ENCODE measurements at regions of chr2 and their contacts with region 1.

Region 1: DNA sequence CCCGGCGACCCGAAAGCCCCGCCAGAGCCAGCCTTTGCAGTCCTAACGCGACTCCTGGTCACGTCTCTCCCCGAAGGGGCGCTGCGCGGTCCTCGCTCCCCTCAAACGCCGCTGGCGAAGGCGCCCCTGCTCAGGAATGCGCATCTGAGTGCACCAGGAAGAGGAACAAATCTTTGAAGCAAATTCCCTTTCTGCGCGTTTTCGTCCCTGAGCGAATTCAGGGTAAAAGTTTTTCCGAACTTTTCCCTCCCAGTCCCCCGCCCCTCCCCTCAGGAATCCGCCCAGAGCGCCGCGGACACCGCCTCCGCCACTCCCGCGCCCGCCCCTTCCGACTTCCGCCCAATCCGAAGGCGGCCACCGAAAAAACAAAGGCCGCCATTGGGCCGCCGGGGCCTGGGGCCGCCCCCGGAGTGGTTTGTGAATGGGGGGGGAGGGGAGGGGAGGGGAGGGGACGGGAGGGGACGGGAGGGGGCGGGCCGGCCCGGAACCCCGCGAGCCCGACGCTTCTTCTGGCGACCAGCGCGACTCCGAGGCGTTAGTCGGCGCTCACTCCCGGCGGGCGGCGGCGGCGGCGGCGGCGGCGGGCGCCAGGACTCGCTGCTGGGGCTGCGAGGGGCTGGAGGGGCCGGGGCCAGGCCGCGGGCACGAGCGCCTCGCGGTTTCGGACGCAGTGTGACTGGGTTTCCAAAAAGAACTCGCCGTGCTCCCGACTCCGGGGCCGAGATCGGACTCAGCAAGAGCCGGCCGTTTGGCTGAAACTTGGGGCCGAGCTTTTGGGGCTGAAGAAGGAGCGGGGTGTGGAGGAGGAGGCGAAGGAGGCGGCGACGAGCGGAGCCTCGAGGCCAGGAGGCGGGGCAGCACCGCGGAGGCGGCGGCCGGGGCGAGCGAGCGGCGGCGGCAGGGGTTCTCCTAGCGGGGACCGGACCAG is at the start of gene FZD7:
- DNase-seq: peak; percentile 98
- H3K4me3 ChIP-seq: peak within 1 kb of the TSS; percentile 69 to 84 (median 74)
- H3K27ac ChIP-seq: peak within 1 kb of the TSS; percentile 96 to 99 (median 98)
- H3K4me1 ChIP-seq: peaks cover 0 to 27% (median 12%) of the 10 kb centered on the region in 4 donors
- H3K27me3 ChIP-seq: peaks cover 0 to 5% (median 0%) of the 10 kb centered on the region in 3 donors
- CTCF ChIP-seq: no peak
- EP300 ChIP-seq: no peak
- POLR2A ChIP-seq: peak; percentile 36 to 47
- total RNA-seq, gene FZD7: 37.9 to 51.2 (median 48.1) TPM

Region 2: GRCh38 chr2:201642579-201643215 is 390.9 kb before region 1 on chr2:
- intact Hi-C with region 1: loop called (anchors 10 kb)
- DNase-seq: peak; percentile 89
- H3K4me3 ChIP-seq: peak overlapping the region; percentile 71 to 84 (median 76)
- H3K27ac ChIP-seq: peak overlapping the region; percentile 93 to 96 (median 94)
- H3K4me1 ChIP-seq: peaks cover 0 to 20% (median 18%) of the 10 kb centered on the region in 4 donors
- H3K27me3 ChIP-seq: no peaks in the 10 kb centered on the region
- CTCF ChIP-seq: no peak
- EP300 ChIP-seq: peak in 1 of 4 donors; percentile 2
- POLR2A ChIP-seq: peak; percentile 48 to 80

Region 3: DNA sequence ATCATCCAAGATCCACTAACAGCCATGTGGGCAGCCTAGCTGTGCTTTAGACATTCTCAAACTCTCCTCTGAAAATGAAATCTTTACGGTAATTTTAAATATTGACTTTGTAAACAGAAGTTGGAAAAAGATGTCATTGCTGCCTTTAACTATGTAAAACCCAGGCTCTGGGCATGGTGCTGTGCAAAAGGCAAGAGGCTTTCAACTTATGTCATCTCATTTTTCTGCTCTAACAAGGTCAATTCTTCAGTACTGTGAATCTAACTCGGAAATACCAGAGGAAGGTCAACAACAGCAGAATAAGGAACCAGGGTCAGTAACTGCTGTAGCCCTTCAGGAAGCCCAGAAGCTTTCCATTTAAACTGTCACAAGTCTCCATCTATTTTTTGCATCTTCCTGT is 298.1 kb before region 1 on chr2:
- intact Hi-C with region 1: no loop called
- DNase-seq: no peak
- H3K4me3 ChIP-seq: no peak overlapping the region
- H3K27ac ChIP-seq: no peak overlapping the region
- H3K4me1 ChIP-seq: no peaks in the 10 kb centered on the region
- H3K27me3 ChIP-seq: no peaks in the 10 kb centered on the region
- CTCF ChIP-seq: no peak
- EP300 ChIP-seq: no peak
- POLR2A ChIP-seq: no peak

Region 4: DNA sequence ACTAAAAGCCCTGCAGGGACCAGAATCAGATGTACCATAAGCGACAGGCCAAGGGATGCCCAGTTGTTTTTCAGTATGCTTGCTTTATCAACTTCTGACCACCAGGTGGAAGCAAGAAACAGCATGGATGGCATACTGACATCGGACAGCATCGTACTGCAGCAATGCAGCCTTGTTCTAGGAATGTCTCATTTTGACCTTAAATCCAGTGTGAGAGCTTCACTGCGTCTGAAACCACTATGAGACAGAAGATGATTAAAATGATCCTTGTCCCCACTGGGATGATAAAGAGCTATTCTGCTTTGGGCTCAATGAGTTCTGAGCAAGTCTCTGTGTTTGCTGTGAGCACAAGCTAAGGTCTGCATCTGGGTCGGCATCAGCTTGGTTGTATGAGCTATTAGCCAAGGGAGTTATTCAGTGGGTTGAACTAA is 172.9 kb before region 1 on chr2:
- intact Hi-C with region 1: loop called (anchors 1 kb)
- DNase-seq: peak; percentile 68
- H3K4me3 ChIP-seq: no peak overlapping the region
- H3K27ac ChIP-seq: no peak overlapping the region
- H3K4me1 ChIP-seq: peaks cover 0 to 24% (median 11%) of the 10 kb centered on the region in 4 donors
- H3K27me3 ChIP-seq: no peaks in the 10 kb centered on the region
- CTCF ChIP-seq: peak; percentile 68 to 85 (median 84)
- EP300 ChIP-seq: no peak
- POLR2A ChIP-seq: no peak

Region 5: GRCh38 chr2:201939453-201939941 is 94.1 kb before region 1 on chr2:
- intact Hi-C with region 1: no loop called
- DNase-seq: no peak
- H3K4me3 ChIP-seq: no peak overlapping the region
- H3K27ac ChIP-seq: no peak overlapping the region
- H3K4me1 ChIP-seq: no peaks in the 10 kb centered on the region
- H3K27me3 ChIP-seq: no peaks in the 10 kb centered on the region
- CTCF ChIP-seq: no peak
- EP300 ChIP-seq: no peak
- POLR2A ChIP-seq: no peak

Region 6: DNA sequence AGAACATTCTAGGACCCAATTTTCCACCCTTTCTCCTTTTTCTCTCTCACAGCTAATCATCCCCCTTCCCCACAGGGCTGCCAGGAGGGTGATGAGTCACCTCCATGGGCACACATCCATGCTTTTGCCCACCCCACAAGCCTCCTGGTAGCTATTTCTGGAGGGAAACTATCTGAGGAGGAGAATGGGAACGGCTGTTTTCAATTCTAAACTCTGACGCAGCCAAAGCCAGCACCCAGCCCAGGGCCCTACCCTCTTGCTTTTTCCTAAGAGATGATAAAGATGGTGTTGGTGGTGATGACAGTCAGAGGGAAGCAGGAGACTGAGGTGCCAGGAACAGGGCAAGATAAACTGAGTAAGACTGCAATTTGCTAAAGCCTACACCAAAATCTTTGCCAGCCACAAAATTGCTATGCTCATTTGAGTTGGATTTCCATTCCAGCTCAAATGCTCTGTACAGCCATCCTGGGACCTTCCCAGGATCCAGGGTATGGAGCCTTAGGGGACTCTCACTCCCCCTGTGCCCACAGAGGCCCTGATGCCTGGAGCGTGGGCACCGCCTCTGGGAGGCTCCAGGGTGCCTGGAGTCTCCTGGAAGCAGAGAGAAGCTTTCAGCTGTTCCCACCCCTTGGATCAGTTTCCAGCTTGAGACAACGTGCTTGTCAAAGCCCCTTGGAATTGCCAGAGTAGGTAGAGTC is 61.9 kb before region 1 on chr2:
- intact Hi-C with region 1: no loop called
- DNase-seq: peak; percentile 24
- H3K4me3 ChIP-seq: no peak overlapping the region
- H3K27ac ChIP-seq: no peak overlapping the region
- H3K4me1 ChIP-seq: peaks cover 0 to 8% (median 0%) of the 10 kb centered on the region in 4 donors
- H3K27me3 ChIP-seq: no peaks in the 10 kb centered on the region
- CTCF ChIP-seq: no peak
- EP300 ChIP-seq: no peak
- POLR2A ChIP-seq: no peak

Region 7: GRCh38 chr2:202178342-202178958 is 144.9 kb after region 1 on chr2:
- intact Hi-C with region 1: loop called (anchors 1 kb)
- DNase-seq: peak; percentile 82
- H3K4me3 ChIP-seq: no peak overlapping the region
- H3K27ac ChIP-seq: no peak overlapping the region
- H3K4me1 ChIP-seq: no peaks in the 10 kb centered on the region
- H3K27me3 ChIP-seq: no peaks in the 10 kb centered on the region
- CTCF ChIP-seq: peak; percentile 69 to 80 (median 74)
- EP300 ChIP-seq: no peak
- POLR2A ChIP-seq: no peak

Region 8: GRCh38 chr2:202375609-202376408 is 342.2 kb after region 1 on chr2 and contains the start of gene BMPR2:
- intact Hi-C with region 1: loop called (anchors 2 kb)
- DNase-seq: peak; percentile 94
- H3K4me3 ChIP-seq: peak within 1 kb of the TSS; percentile 84 to 98 (median 92)
- H3K27ac ChIP-seq: peak within 1 kb of the TSS; percentile 97 to 99 (median 98)
- H3K4me1 ChIP-seq: peaks cover 0 to 33% (median 20%) of the 10 kb centered on the region in 4 donors
- H3K27me3 ChIP-seq: no peaks in the 10 kb centered on the region
- CTCF ChIP-seq: no peak
- EP300 ChIP-seq: peak in 2 of 4 donors; percentile 12 to 21
- POLR2A ChIP-seq: peak; percentile 73 to 78
- total RNA-seq, gene BMPR2: 49.9 to 74.9 (median 63.3) TPM